Activated naive CD4-positive, alpha-beta T cell treated with anti-CD3 and anti-CD28 coated beads for 36 hours (primary cell): ENCODE measurements at regions of chr18 and their contacts with region 1.

Region 1: GRCh38 chr18:35040988-35041814 is at the start of gene MAPRE2:
- DNase-seq: peak; percentile 99
- H3K4me3 Mint-ChIP-seq: peak within 1 kb of the TSS; percentile 96
- H3K27ac Mint-ChIP-seq: peak within 1 kb of the TSS; percentile 95
- H3K4me1 Mint-ChIP-seq: peaks cover 59% of the 10 kb centered on the region
- H3K27me3 Mint-ChIP-seq: no peaks in the 10 kb centered on the region
- total RNA-seq, gene MAPRE2: 62.5 to 66.2 TPM

Region 2: DNA sequence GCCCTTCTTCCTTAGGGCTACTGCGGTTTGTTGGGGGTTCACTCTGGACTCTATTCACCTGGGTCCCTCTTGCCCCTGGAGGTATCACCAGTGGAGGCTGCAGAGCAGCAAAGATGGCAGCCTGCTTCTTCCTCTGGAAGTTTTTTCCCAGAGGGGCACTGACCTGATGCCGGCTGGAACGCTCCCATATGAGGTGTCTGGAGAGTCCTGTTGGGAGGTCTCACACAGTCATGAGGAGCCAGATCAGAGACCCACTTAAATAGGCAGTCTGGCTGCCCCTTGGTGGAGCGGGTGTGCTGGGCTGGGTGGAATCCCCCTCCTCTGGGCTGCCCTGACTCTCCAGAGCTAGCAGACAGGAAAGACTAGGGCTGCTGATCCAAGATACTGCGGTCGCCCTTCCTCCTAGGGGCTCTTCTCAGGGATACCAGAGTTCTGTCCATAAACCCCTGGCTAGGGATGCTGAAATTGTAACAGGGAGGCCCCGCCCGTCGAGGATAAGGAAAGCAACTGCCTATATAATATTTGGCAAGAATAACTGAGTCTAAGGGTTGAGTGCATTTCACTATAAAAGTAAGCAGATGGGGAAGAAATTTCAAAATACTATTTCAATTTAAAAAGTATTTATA is 957.2 kb before region 1 on chr18:
- CTCF ChIA-PET with region 1: no interaction called
- intact Hi-C with region 1: no loop called
- DNase-seq: no peak
- H3K4me3 Mint-ChIP-seq: no peak overlapping the region
- H3K27ac Mint-ChIP-seq: no peak overlapping the region
- H3K4me1 Mint-ChIP-seq: no peaks in the 10 kb centered on the region
- H3K27me3 Mint-ChIP-seq: no peaks in the 10 kb centered on the region

Region 3: DNA sequence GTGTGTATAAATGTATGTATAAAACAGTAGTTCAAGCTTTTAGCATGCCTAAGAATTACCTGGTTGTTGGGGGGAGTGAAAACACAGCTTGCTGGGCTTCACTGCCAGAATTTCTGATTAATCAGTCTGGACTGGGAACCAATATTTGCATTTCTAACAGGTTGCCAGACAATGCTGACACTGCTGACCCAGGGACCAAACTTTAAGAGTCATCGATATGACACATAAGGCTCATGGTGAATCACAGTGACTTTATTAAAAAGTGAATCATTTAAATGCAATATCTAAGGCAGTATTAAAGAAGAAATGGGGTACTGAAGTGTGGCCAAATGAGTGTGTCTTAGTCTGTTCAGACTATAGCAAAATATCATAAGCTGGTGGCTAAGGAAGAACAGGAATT is 527.0 kb before region 1 on chr18:
- CTCF ChIA-PET with region 1: no interaction called
- intact Hi-C with region 1: no loop called
- DNase-seq: no peak
- H3K4me3 Mint-ChIP-seq: no peak overlapping the region
- H3K27ac Mint-ChIP-seq: no peak overlapping the region
- H3K4me1 Mint-ChIP-seq: no peaks in the 10 kb centered on the region
- H3K27me3 Mint-ChIP-seq: no peaks in the 10 kb centered on the region

Region 4: GRCh38 chr18:34624551-34624950 is 416.6 kb before region 1 on chr18:
- CTCF ChIA-PET with region 1: no interaction called
- intact Hi-C with region 1: no loop called
- DNase-seq: no peak
- H3K4me3 Mint-ChIP-seq: no peak overlapping the region
- H3K27ac Mint-ChIP-seq: no peak overlapping the region
- H3K4me1 Mint-ChIP-seq: no peaks in the 10 kb centered on the region
- H3K27me3 Mint-ChIP-seq: peaks cover 2% of the 10 kb centered on the region

Region 5: DNA sequence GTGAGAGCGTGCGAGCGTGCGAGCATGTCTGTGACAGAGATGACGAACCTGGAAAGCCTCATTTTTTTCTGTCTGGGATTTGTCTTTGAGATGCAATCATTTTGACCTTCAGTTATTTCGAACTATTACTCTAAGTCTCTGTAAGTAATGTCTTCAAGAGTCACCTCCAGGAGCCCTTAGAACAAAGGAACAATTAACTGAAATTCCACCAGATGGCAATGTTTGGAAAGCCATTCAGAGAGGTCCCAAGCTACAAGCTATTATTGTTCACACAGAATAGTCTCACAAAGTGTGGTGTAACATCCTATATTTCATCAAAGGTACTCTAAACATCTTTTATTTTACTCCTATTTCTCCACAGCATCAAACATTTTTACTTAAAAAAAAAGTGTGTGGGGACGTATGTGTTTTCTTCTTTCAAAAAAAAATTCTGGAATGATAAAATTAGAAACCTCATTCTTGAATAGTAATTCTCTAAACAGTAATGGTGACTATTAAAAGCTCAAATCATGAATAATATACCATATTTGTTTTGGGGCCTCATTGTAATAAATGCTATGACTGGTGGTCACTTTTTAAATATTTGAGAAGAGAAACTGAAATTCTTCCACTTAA is 35.1 kb before region 1 on chr18:
- CTCF ChIA-PET with region 1: interaction called, 6 read pairs
- intact Hi-C with region 1: loop called (anchors 1 kb)
- DNase-seq: no peak
- H3K4me3 Mint-ChIP-seq: no peak overlapping the region
- H3K27ac Mint-ChIP-seq: no peak overlapping the region
- H3K4me1 Mint-ChIP-seq: no peaks in the 10 kb centered on the region
- H3K27me3 Mint-ChIP-seq: no peaks in the 10 kb centered on the region

Region 6: DNA sequence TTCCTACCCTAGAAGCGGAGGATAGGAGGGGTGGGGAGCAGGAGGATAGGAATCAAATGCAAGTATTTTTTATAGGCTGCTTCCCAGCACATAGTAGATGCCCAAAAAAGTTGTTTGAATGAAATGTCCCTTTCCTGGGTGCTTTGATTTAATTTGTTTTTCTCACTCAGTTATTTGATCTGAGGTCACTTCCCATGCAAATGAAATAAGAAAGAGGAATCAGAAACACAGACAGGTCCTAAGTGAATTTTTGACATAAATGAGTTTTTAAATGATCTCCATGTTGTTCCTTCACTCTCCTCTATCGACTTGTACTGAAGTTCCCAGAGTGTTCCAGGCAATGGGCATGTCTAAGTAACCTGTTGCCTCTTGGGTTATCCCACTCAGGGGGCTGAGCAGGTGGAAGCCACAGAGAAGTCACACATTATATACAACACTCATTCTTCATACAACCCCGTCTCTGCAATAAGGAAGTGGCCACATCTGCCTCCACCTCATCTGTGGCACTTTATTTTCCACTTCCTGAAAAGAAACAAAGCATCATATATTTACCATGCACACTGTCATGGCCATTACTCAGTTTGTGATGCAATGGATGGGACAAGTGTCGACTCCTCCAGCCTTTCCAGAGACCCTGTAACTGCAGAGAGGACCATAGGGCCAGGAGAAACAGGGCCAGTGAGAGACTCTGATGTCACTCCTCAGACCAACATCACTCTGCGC is 117.7 kb after region 1 on chr18:
- CTCF ChIA-PET with region 1: no interaction called
- intact Hi-C with region 1: loop called (anchors 1 kb)
- DNase-seq: peak; percentile 53
- H3K4me3 Mint-ChIP-seq: no peak overlapping the region
- H3K27ac Mint-ChIP-seq: peak overlapping the region; percentile 73
- H3K4me1 Mint-ChIP-seq: peaks cover 20% of the 10 kb centered on the region
- H3K27me3 Mint-ChIP-seq: no peaks in the 10 kb centered on the region

Region 7: GRCh38 chr18:35478520-35479435 is 437.6 kb after region 1 on chr18:
- CTCF ChIA-PET with region 1: no interaction called
- intact Hi-C with region 1: loop called (anchors 5 kb)
- DNase-seq: peak; percentile 68
- H3K4me3 Mint-ChIP-seq: peak overlapping the region; percentile 0
- H3K27ac Mint-ChIP-seq: peak overlapping the region; percentile 9
- H3K4me1 Mint-ChIP-seq: peaks cover 43% of the 10 kb centered on the region
- H3K27me3 Mint-ChIP-seq: no peaks in the 10 kb centered on the region

Region 8: DNA sequence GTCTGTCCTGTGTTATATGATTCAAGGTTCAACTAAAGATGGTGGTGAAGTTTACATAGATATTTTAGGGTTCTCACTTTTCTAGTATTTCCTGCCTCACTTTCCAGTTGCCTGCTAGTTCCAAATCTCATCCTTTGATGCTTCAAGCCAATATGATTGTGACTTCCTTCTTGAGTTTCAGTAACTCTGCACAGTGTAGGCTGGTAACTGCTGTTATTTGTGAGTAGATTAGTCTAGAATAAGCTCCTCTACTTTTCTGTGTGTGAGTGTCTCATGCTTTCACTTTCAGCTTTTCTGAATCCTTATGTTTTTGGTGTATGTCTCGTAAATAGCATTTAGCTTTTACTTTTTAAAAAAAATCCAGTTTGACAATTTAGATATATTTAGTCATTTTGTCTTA is 582.9 kb after region 1 on chr18:
- CTCF ChIA-PET with region 1: no interaction called
- intact Hi-C with region 1: loop called (anchors 1 kb)
- DNase-seq: no peak
- H3K4me3 Mint-ChIP-seq: peak overlapping the region; percentile 20
- H3K27ac Mint-ChIP-seq: peak overlapping the region; percentile 48
- H3K4me1 Mint-ChIP-seq: peaks cover 33% of the 10 kb centered on the region
- H3K27me3 Mint-ChIP-seq: no peaks in the 10 kb centered on the region

Region 9: DNA sequence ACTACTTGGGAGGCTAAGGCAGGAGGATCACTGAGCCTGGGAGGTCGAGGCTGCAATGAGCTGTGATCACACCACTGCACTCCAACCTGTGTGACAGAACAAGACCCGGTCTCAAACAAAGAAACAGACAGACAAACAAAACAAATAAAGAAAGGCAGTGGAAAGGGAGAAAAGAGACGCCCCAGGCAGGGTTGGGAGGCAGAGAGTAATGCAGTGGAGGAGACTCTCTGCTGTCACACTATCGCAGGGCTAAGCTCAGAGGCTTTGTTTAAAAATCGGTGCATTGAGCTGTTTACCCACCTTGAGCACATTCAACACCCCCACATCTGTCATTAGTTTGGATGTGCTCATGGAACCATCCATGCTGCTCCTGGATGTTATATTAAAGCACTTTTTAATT is 847.1 kb after region 1 on chr18:
- CTCF ChIA-PET with region 1: no interaction called
- intact Hi-C with region 1: no loop called
- DNase-seq: no peak
- H3K4me3 Mint-ChIP-seq: no peak overlapping the region
- H3K27ac Mint-ChIP-seq: no peak overlapping the region
- H3K4me1 Mint-ChIP-seq: no peaks in the 10 kb centered on the region
- H3K27me3 Mint-ChIP-seq: peaks cover 10% of the 10 kb centered on the region